Heart left ventricle (tissue), 16 donors: ENCODE measurements at regions of chr10 and their contacts with region 1.

Region 1: DNA sequence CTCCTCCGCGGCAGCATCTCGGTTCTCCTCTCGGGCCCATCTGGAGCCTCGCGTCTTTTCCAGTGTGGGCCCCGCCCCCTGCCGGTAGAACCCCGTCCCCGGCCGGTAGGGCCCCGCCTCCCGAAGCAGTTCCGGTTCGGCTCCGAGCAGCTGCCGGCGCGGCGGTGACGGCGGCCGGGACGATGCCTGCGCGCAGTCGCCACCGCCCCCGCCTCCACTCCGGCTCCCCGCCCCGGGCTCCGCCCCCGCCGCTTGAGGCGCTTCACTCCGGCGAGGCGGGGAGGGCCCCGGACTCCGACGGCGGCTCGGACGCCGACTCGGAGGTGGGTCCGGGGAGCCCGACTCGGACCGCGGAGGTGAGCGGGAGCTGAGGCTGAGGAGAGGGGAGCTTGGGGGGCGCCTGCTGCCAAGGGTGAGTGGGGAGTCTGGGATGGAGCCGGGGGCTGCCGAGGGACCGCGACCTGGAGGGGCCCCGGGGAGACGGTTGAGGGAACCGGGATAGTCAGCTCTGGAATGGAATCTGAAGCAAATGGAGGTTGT is at the start of gene SAMD8:
- DNase-seq: peak; percentile 95 to 98 (median 98)
- ATAC-seq: peak; percentile 62 to 90 (median 89)
- H3K4me3 ChIP-seq: peak within 1 kb of the TSS; percentile 62 to 96 (median 82)
- H3K27ac ChIP-seq: peak within 1 kb of the TSS; percentile 87 to 98 (median 96)
- H3K4me1 ChIP-seq: peaks cover 0 to 62% (median 34%) of the 10 kb centered on the region in 12 donors
- H3K27me3 ChIP-seq: no peaks in the 10 kb centered on the region
- CTCF ChIP-seq: peak; percentile 20 to 64 (median 50)
- POLR2A ChIP-seq: peak; percentile 75 to 94
- total RNA-seq, gene SAMD8: 19.4 to 43.0 (median 25.1) TPM

Region 2: GRCh38 chr10:75170215-75170614 is 58.8 kb after region 1 on chr10:
- intact Hi-C with region 1: loop called in 1 of 10 experiments (anchors 10 kb)
- DNase-seq: no peak
- ATAC-seq: peak; percentile 78 to 87 (median 86)
- H3K4me3 ChIP-seq: no peak overlapping the region
- H3K27ac ChIP-seq: peak overlapping the region; percentile 47 to 80 (median 60)
- H3K4me1 ChIP-seq: peaks cover 0 to 31% (median 14%) of the 10 kb centered on the region in 12 donors
- H3K27me3 ChIP-seq: no peaks in the 10 kb centered on the region
- CTCF ChIP-seq: no peak
- POLR2A ChIP-seq: no peak

Region 3: DNA sequence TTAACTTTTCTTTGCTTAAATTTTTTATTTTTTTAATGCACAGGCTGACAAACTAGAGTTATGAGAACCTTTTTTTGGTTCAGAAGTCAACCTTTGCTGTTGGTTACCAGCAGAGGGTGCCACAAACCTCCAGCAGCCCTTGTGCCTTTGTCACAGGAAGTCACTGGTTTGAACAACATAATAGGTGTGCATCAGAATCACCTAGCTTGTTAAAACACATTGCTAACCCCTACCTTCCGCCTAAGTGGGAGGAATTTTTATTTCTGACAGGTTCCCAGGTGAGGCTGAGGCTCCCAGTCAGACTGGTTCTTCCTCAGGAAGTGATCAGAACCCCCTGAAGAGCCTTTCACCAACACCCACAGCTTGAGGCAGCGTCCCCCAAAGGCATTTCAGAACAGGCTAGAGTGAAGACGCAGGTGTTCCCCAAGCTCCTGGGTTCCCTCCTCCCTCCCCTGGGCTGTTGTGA is 76.6 kb after region 1 on chr10:
- intact Hi-C with region 1: loop called in 3 of 10 experiments (anchors 5 to 10 kb)
- DNase-seq: peak in 4 of 5 donors; percentile 40 to 47 (median 44)
- ATAC-seq: peak in 3 of 4 donors; percentile 32 to 57 (median 52)
- H3K4me3 ChIP-seq: no peak overlapping the region
- H3K27ac ChIP-seq: no peak overlapping the region
- H3K4me1 ChIP-seq: peaks cover 0 to 24% (median 10%) of the 10 kb centered on the region in 12 donors
- H3K27me3 ChIP-seq: no peaks in the 10 kb centered on the region
- CTCF ChIP-seq: peak; percentile 51 to 79 (median 69)
- POLR2A ChIP-seq: no peak

Region 4: GRCh38 chr10:75223507-75223906 is 112.1 kb after region 1 on chr10:
- intact Hi-C with region 1: loop called in 2 of 10 experiments (anchors 5 to 10 kb)
- DNase-seq: peak in 1 of 5 donors; percentile 2
- ATAC-seq: no peak
- H3K4me3 ChIP-seq: no peak overlapping the region
- H3K27ac ChIP-seq: peak overlapping the region in 9 of 12 donors; percentile 33 to 86 (median 83)
- H3K4me1 ChIP-seq: peaks cover 27 to 85% (median 60%) of the 10 kb centered on the region in 12 donors
- H3K27me3 ChIP-seq: no peaks in the 10 kb centered on the region
- CTCF ChIP-seq: no peak
- POLR2A ChIP-seq: no peak